Caco-2 (cell line): ENCODE measurements at regions of chr11 and their contacts with region 1.

Region 1: DNA sequence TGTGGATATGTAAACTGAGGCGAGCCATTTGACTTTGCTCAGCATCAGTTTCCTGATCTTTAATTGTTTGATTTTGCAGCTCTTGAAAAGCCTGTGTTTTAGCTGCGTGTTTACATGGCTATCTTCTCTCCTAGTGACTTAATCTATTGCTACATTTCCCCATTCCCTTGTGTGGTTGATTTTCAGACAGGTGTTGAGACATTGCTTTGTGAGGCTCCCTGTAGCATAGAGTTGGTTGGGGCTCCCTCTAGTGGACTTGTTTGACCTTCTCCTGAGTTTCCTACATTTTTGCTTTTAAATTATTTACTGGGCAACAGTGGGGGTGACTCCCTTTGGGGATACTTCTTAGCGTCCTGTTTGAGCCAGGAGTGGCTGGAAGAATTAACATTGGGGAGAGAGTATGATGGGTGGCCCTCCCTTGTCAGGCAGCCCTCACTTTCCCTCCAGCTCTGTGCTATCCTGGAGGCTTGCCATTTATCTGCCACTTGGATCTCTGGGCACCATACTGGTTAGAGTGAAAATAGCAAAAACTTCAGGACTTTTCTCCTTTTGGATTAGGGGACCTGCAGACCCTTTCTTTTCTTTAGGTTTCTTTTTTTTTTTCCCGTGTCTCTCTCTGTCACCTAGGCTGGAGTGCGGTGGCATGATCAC is 9.2 kb upstream of the CBL start:
- DNase-seq: peak; percentile 86 to 92
- H3K4me3 ChIP-seq: no peak overlapping the region
- H3K4me3 Mint-ChIP-seq: no peak overlapping the region
- H3K27ac Mint-ChIP-seq: peak overlapping the region; percentile 15
- H3K4me1 ChIP-seq: peaks cover 10% of the 10 kb centered on the region
- H3K4me1 Mint-ChIP-seq: peaks cover 10% of the 10 kb centered on the region
- H3K27me3 ChIP-seq: no peaks in the 10 kb centered on the region
- H3K27me3 Mint-ChIP-seq: peaks cover 2% of the 10 kb centered on the region
- CTCF ChIP-seq: peak; percentile 93 to 96

Region 2: GRCh38 chr11:118851970-118852369 is 345.0 kb before region 1 on chr11:
- CTCF ChIA-PET with region 1: no interaction called
- POLR2A ChIA-PET with region 1: no interaction called
- intact Hi-C with region 1: no loop called
- DNase-seq: no peak
- H3K4me3 ChIP-seq: no peak overlapping the region
- H3K4me3 Mint-ChIP-seq: no peak overlapping the region
- H3K27ac Mint-ChIP-seq: no peak overlapping the region
- H3K4me1 ChIP-seq: no peaks in the 10 kb centered on the region; the same call in 1 of the 2 replicates
- H3K4me1 Mint-ChIP-seq: no peaks in the 10 kb centered on the region
- H3K27me3 ChIP-seq: no peaks in the 10 kb centered on the region
- H3K27me3 Mint-ChIP-seq: no peaks in the 10 kb centered on the region
- CTCF ChIP-seq: no peak

Region 3: GRCh38 chr11:119168471-119169281 is 28.3 kb before region 1 on chr11 and contains the start of gene NLRX1:
- CTCF ChIA-PET with region 1: interaction called, 3 read pairs
- POLR2A ChIA-PET with region 1: no interaction called
- intact Hi-C with region 1: loop called (anchors 1 kb)
- DNase-seq: peak; percentile 74 to 80
- H3K4me3 ChIP-seq: peak within 1 kb of the TSS; percentile 51
- H3K4me3 Mint-ChIP-seq: peak within 1 kb of the TSS; percentile 66
- H3K27ac Mint-ChIP-seq: no peak within 1 kb of the TSS
- H3K4me1 ChIP-seq: peaks cover 4% of the 10 kb centered on the region; the same call in 1 of the 2 replicates
- H3K4me1 Mint-ChIP-seq: no peaks in the 10 kb centered on the region
- H3K27me3 ChIP-seq: no peaks in the 10 kb centered on the region
- H3K27me3 Mint-ChIP-seq: no peaks in the 10 kb centered on the region
- CTCF ChIP-seq: peak; percentile 45 to 74
- total RNA-seq, gene NLRX1: 7.2 and 8.0 TPM in 2 replicates

Region 4: GRCh38 chr11:119181677-119182412 is 15.1 kb before region 1 on chr11:
- CTCF ChIA-PET with region 1: interaction called, 10 read pairs
- POLR2A ChIA-PET with region 1: interaction called, 6 read pairs
- intact Hi-C with region 1: no loop called
- DNase-seq: no peak
- H3K4me3 ChIP-seq: no peak overlapping the region
- H3K4me3 Mint-ChIP-seq: no peak overlapping the region
- H3K27ac Mint-ChIP-seq: no peak overlapping the region
- H3K4me1 ChIP-seq: peaks cover 17% of the 10 kb centered on the region
- H3K4me1 Mint-ChIP-seq: peaks cover 15% of the 10 kb centered on the region
- H3K27me3 ChIP-seq: no peaks in the 10 kb centered on the region
- H3K27me3 Mint-ChIP-seq: no peaks in the 10 kb centered on the region
- CTCF ChIP-seq: no peak

Region 5: GRCh38 chr11:119236490-119236889 is 39.5 kb after region 1 on chr11:
- CTCF ChIA-PET with region 1: no interaction called
- POLR2A ChIA-PET with region 1: no interaction called
- intact Hi-C with region 1: no loop called
- DNase-seq: no peak
- H3K4me3 ChIP-seq: no peak overlapping the region
- H3K4me3 Mint-ChIP-seq: no peak overlapping the region
- H3K27ac Mint-ChIP-seq: no peak overlapping the region
- H3K4me1 ChIP-seq: no peaks in the 10 kb centered on the region
- H3K4me1 Mint-ChIP-seq: no peaks in the 10 kb centered on the region
- H3K27me3 ChIP-seq: no peaks in the 10 kb centered on the region
- H3K27me3 Mint-ChIP-seq: no peaks in the 10 kb centered on the region
- CTCF ChIP-seq: no peak